ENCODE measurements at regions of chr4 and their contacts with region 1.

Region 1: GRCh38 chr4:41475402-41475801 is 62.6 kb upstream of the LIMCH1 start:
- DNase-seq: peak; percentile 68 to 94
- H3K4me3 ChIP-seq: no peak overlapping the region
- H3K27ac ChIP-seq: peak overlapping the region; percentile 84
- H3K4me1 ChIP-seq: peaks cover 26% of the 10 kb centered on the region
- H3K27me3 ChIP-seq: no peaks in the 10 kb centered on the region
- CTCF ChIP-seq: no peak

Region 2: GRCh38 chr4:40990236-40990898 is 485.0 kb before region 1 on chr4:
- CTCF ChIA-PET with region 1: interaction called, 13 read pairs
- POLR2A ChIA-PET with region 1: no interaction called
- intact Hi-C with region 1: no loop called
- DNase-seq: peak; percentile 45 to 85
- H3K4me3 ChIP-seq: no peak overlapping the region
- H3K27ac ChIP-seq: peak overlapping the region; percentile 92
- H3K4me1 ChIP-seq: peaks cover 39% of the 10 kb centered on the region
- H3K27me3 ChIP-seq: no peaks in the 10 kb centered on the region
- CTCF ChIP-seq: no peak

Region 3: DNA sequence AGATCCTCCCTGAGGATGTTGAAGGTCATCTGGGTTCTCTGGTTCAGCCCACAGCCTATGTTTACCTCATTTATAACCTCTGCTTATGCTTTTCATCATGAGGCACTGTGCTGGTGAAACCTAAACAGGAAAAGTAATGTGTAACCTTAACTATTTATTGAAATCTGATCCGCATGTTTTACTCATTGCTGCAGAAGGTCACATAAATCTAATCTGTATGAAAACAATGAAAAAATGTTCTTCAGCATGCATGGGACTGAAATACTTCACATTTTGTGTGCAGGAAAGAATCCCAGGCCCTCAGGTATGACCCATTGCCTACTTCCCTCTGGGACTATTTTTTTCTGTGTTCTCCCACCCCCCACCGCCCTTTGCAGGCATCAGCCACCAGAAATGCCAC is 188.4 kb before region 1 on chr4:
- CTCF ChIA-PET with region 1: no interaction called
- POLR2A ChIA-PET with region 1: no interaction called
- intact Hi-C with region 1: loop called (anchors 1 kb)
- DNase-seq: peak; percentile 44 to 96
- H3K4me3 ChIP-seq: no peak overlapping the region
- H3K27ac ChIP-seq: peak overlapping the region; percentile 89
- H3K4me1 ChIP-seq: peaks cover 40% of the 10 kb centered on the region
- H3K27me3 ChIP-seq: no peaks in the 10 kb centered on the region
- CTCF ChIP-seq: no peak

Region 4: GRCh38 chr4:41318867-41319535 is 156.4 kb before region 1 on chr4:
- CTCF ChIA-PET with region 1: no interaction called
- POLR2A ChIA-PET with region 1: no interaction called
- intact Hi-C with region 1: loop called (anchors 1 kb)
- DNase-seq: peak; percentile 74 to 98
- H3K4me3 ChIP-seq: no peak overlapping the region; the same call in 1 of the 2 replicates
- H3K27ac ChIP-seq: peak overlapping the region; percentile 98
- H3K4me1 ChIP-seq: peaks cover 72% of the 10 kb centered on the region
- H3K27me3 ChIP-seq: no peaks in the 10 kb centered on the region
- CTCF ChIP-seq: no peak

Region 5: DNA sequence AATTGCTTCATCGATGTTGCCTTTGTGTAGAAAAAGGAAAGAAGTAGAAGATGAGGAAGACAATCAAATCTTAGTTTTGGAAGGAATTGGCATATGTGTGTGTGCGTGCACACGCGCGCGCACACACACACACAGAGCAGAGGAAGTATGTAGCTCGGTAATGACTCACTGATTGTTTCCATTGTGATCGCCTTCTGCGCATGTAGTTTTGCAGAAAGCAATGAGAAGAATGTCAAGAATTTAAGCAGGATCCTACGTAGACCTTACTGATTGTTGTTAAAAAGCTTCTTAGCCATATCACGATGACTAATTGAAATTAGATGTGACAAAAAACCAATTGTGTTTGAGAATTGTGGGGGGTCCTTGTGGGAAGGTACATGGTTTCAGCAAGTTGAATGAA is 49.7 kb after region 1 on chr4:
- CTCF ChIA-PET with region 1: interaction called, 3 read pairs
- POLR2A ChIA-PET with region 1: no interaction called
- intact Hi-C with region 1: loop called (anchors 1 kb)
- DNase-seq: peak; percentile 66 to 97
- H3K4me3 ChIP-seq: no peak overlapping the region
- H3K27ac ChIP-seq: peak overlapping the region; percentile 97
- H3K4me1 ChIP-seq: peaks cover 42% of the 10 kb centered on the region
- H3K27me3 ChIP-seq: no peaks in the 10 kb centered on the region
- CTCF ChIP-seq: no peak

Region 6: GRCh38 chr4:41538017-41538733 is 62.8 kb after region 1 on chr4 and contains the start of gene LIMCH1:
- CTCF ChIA-PET with region 1: no interaction called
- POLR2A ChIA-PET with region 1: interaction called, 3 read pairs
- intact Hi-C with region 1: loop called (anchors 2 kb)
- DNase-seq: peak in 1 of 2 experiments; percentile 65
- H3K4me3 ChIP-seq: peak within 1 kb of the TSS; percentile 44
- H3K27ac ChIP-seq: peak within 1 kb of the TSS; percentile 96
- H3K4me1 ChIP-seq: peaks cover 65% of the 10 kb centered on the region
- H3K27me3 ChIP-seq: no peaks in the 10 kb centered on the region
- CTCF ChIP-seq: no peak
- total RNA-seq, gene LIMCH1: 252 and 339 TPM in 2 replicates

Region 7: GRCh38 chr4:41661442-41662076 is 186.2 kb after region 1 on chr4:
- CTCF ChIA-PET with region 1: no interaction called
- POLR2A ChIA-PET with region 1: no interaction called
- intact Hi-C with region 1: loop called (anchors 2 kb)
- DNase-seq: peak in 1 of 2 experiments; percentile 63
- H3K4me3 ChIP-seq: no peak overlapping the region
- H3K27ac ChIP-seq: peak overlapping the region; percentile 31
- H3K4me1 ChIP-seq: peaks cover 25% of the 10 kb centered on the region
- H3K27me3 ChIP-seq: no peaks in the 10 kb centered on the region
- CTCF ChIP-seq: peak; percentile 92

Region 8: GRCh38 chr4:42101446-42101975 is 626.1 kb after region 1 on chr4:
- CTCF ChIA-PET with region 1: no interaction called
- POLR2A ChIA-PET with region 1: no interaction called
- intact Hi-C with region 1: no loop called
- DNase-seq: peak in 1 of 2 experiments; percentile 65
- H3K4me3 ChIP-seq: no peak overlapping the region
- H3K27ac ChIP-seq: no peak overlapping the region
- H3K4me1 ChIP-seq: no peaks in the 10 kb centered on the region
- H3K27me3 ChIP-seq: no peaks in the 10 kb centered on the region
- CTCF ChIP-seq: no peak

Measured in PC-9 (cell line).